ENCODE measurements at regions of chr6 and their contacts with region 1.

Region 1: GRCh38 chr6:36094753-36095496 is 35.4 kb upstream of the MAPK13 start:
- H3K4me3 ChIP-seq: no peak overlapping the region
- H3K27ac ChIP-seq: no peak overlapping the region
- H3K4me1 ChIP-seq: no peaks in the 10 kb centered on the region
- CTCF ChIP-seq: peak; percentile 84

Region 2: GRCh38 chr6:35955976-35956375 is 138.9 kb before region 1 on chr6:
- CTCF ChIA-PET with region 1: interaction called, 18 read pairs
- POLR2A ChIA-PET with region 1: no interaction called
- H3K4me3 ChIP-seq: no peak overlapping the region
- H3K27ac ChIP-seq: no peak overlapping the region
- H3K4me1 ChIP-seq: no peaks in the 10 kb centered on the region
- CTCF ChIP-seq: peak; percentile 54; the same call in 1 of the 2 replicates

Region 3: GRCh38 chr6:36015666-36016065 is 79.3 kb before region 1 on chr6:
- CTCF ChIA-PET with region 1: interaction called, 10 read pairs
- POLR2A ChIA-PET with region 1: no interaction called
- H3K4me3 ChIP-seq: no peak overlapping the region
- H3K27ac ChIP-seq: no peak overlapping the region
- H3K4me1 ChIP-seq: peaks cover 3% of the 10 kb centered on the region; the same call in 1 of the 2 replicates
- CTCF ChIP-seq: no peak

Region 4: GRCh38 chr6:36033935-36034334 is 61.0 kb before region 1 on chr6:
- CTCF ChIA-PET with region 1: interaction called, 232 read pairs
- POLR2A ChIA-PET with region 1: interaction called, 32 read pairs
- H3K4me3 ChIP-seq: no peak overlapping the region
- H3K27ac ChIP-seq: no peak overlapping the region
- H3K4me1 ChIP-seq: peaks cover 16% of the 10 kb centered on the region; the same call in 1 of the 2 replicates
- CTCF ChIP-seq: no peak

Region 5: DNA sequence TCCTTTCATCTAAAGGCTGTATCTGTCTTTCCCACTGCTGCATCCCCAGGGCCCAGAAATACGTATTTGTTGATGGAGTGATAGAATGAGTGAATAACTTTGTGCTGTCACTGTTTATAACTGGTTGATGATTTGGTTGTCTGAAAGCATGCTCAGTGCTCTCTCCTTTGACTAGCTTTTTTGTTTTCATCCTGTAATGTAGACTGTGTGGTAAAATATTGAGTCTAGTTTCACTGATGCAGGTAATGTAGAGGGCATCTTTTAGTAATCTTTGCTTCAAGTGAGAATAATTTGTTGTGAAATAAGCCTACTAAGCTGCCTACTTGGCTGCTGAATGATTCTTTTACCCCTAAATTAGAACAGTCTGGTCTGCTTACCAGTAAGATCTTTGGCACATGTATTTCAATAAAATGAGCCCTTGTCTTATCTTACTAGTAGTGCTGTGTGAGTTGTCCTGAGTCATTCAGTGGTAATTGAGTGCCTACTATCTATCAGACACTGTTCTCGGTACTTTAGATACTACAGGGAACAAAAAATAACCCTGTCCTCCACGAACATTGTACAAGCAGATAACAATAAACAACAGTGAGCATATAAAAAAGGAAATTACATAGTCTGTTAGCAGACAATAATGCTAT is 27.4 kb before region 1 on chr6:
- CTCF ChIA-PET with region 1: interaction called, 85 read pairs
- POLR2A ChIA-PET with region 1: no interaction called
- H3K4me3 ChIP-seq: no peak overlapping the region
- H3K27ac ChIP-seq: no peak overlapping the region
- H3K4me1 ChIP-seq: peaks cover 27% of the 10 kb centered on the region
- CTCF ChIP-seq: no peak

Region 6: GRCh38 chr6:36083446-36083845 is 11.5 kb before region 1 on chr6:
- CTCF ChIA-PET with region 1: interaction called, 49 read pairs
- POLR2A ChIA-PET with region 1: no interaction called
- H3K4me3 ChIP-seq: no peak overlapping the region
- H3K27ac ChIP-seq: no peak overlapping the region
- H3K4me1 ChIP-seq: no peaks in the 10 kb centered on the region
- CTCF ChIP-seq: no peak

Region 7: GRCh38 chr6:36147294-36147693 is 52.4 kb after region 1 on chr6:
- CTCF ChIA-PET with region 1: no interaction called
- POLR2A ChIA-PET with region 1: no interaction called
- H3K4me3 ChIP-seq: no peak overlapping the region
- H3K27ac ChIP-seq: no peak overlapping the region
- H3K4me1 ChIP-seq: no peaks in the 10 kb centered on the region
- CTCF ChIP-seq: no peak

Region 8: GRCh38 chr6:36360241-36361054 is 265.5 kb after region 1 on chr6:
- CTCF ChIA-PET with region 1: interaction called, 12 read pairs
- POLR2A ChIA-PET with region 1: no interaction called
- H3K4me3 ChIP-seq: no peak overlapping the region
- H3K27ac ChIP-seq: no peak overlapping the region
- H3K4me1 ChIP-seq: no peaks in the 10 kb centered on the region
- CTCF ChIP-seq: peak; percentile 79